Esophagus muscularis mucosa (tissue), 4 donors: ENCODE measurements at regions of chr13 and their contacts with region 1.

Region 1: GRCh38 chr13:110097013-110097412 is 209.9 kb downstream of the COL4A1 start:
- DNase-seq: no peak
- H3K4me3 ChIP-seq: no peak overlapping the region
- H3K27ac ChIP-seq: peak overlapping the region in 3 of 4 donors; percentile 1 to 87 (median 85)
- H3K4me1 ChIP-seq: peaks cover 20 to 40% (median 26%) of the 10 kb centered on the region in 4 donors
- H3K27me3 ChIP-seq: no peaks in the 10 kb centered on the region
- CTCF ChIP-seq: no peak
- EP300 ChIP-seq: no peak
- POLR2A ChIP-seq: no peak

Region 2: GRCh38 chr13:110023729-110024644 is 73.0 kb before region 1 on chr13:
- intact Hi-C with region 1: loop called (anchors 5 kb)
- DNase-seq: no peak
- H3K4me3 ChIP-seq: no peak overlapping the region
- H3K27ac ChIP-seq: peak overlapping the region; percentile 81 to 87 (median 84)
- H3K4me1 ChIP-seq: peaks cover 17 to 24% (median 20%) of the 10 kb centered on the region in 4 donors
- H3K27me3 ChIP-seq: no peaks in the 10 kb centered on the region
- CTCF ChIP-seq: no peak
- EP300 ChIP-seq: peak; percentile 57
- POLR2A ChIP-seq: no peak

Region 3: DNA sequence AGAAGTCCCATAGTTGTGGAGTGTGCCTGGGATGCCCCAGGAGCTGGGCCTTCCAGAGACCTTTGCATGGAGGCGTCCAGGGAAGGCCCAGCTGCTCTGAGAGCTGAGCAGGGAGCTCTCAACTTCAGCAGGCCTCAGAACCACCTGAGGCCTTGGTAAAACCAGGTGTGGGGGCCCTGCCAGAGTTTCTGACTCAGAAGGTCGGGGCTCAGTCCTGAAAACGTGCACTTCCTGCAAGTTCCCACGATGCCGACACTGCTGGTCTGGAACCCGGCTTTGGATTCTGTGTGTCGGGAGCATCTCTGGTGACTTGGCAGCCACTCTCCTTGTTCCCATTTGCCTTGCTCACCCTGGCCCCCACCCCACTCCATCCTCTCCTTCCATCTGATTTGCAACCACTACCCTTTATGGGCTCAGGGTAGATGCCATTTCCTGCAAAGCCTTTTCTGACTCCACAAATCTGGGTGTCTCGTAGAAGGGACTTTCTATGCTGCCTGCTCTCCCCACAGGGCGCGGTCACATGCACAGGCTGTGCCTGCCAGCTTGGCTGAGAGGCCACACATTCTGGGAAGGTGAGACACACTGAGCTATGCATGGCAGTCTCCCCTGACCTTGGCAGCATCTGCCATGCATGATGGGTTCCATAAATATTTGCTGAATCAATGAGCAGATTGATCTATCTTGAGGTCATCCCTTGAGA is 34.8 kb before region 1 on chr13:
- intact Hi-C with region 1: no loop called
- DNase-seq: no peak
- H3K4me3 ChIP-seq: no peak overlapping the region
- H3K27ac ChIP-seq: no peak overlapping the region
- H3K4me1 ChIP-seq: peaks cover 0 to 4% (median 0%) of the 10 kb centered on the region in 4 donors
- H3K27me3 ChIP-seq: no peaks in the 10 kb centered on the region
- CTCF ChIP-seq: no peak
- EP300 ChIP-seq: no peak
- POLR2A ChIP-seq: no peak

Region 4: DNA sequence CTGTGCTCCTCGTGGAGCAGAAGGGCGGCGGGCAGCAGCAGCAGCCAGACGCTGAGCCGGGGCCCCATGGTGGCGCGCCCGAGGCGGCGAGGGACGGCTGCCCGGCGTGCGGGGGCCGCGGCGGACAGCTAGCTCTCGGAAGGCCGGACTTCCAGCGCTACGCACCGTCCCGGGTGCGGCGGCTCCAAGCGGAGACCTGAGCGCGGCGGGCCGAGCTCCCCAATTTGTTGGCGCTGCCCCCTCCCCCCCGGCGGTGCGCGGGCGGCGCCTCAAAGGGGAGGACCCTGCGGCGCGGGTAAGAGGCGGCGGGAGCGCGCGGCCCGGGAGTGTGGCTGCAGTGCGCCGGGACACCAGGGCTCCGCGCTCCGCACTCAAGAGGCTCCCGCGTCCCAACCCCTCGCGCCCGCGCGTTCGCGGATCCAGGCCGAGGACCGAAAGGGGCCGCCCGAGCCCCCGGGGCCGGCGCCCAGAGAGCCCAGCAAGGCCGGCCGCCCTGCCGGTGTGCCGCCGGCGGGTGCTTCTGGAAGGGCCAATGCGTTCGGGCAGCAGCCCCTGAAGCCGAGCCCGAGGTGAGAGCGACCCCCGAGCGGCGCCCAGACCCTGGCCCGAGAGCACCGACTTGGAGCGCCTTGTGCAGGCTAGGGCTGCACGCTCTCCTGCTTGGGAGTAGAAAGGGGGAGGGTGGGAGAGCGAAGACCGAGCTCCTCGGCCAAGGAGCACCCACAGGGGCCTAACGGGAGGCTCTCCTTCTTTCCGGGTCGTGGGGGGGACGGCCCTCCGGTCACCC is 210.1 kb after region 1 on chr13 and contains the starts of genes COL4A1 and COL4A2:
- intact Hi-C with region 1: no loop called
- DNase-seq: no peak
- H3K4me3 ChIP-seq: peak within 1 kb of the TSS; percentile 93 to 97 (median 94)
- H3K27ac ChIP-seq: peak within 1 kb of the TSS; percentile 99
- H3K4me1 ChIP-seq: peaks cover 50 to 68% (median 63%) of the 10 kb centered on the region in 4 donors
- H3K27me3 ChIP-seq: peaks cover 0 to 5% (median 2%) of the 10 kb centered on the region in 4 donors
- CTCF ChIP-seq: no peak
- EP300 ChIP-seq: no peak
- POLR2A ChIP-seq: peak; percentile 86
- total RNA-seq, gene COL4A1: 328 to 578 (median 405) TPM
- total RNA-seq, gene COL4A2: 419 to 931 (median 555) TPM

Region 5: DNA sequence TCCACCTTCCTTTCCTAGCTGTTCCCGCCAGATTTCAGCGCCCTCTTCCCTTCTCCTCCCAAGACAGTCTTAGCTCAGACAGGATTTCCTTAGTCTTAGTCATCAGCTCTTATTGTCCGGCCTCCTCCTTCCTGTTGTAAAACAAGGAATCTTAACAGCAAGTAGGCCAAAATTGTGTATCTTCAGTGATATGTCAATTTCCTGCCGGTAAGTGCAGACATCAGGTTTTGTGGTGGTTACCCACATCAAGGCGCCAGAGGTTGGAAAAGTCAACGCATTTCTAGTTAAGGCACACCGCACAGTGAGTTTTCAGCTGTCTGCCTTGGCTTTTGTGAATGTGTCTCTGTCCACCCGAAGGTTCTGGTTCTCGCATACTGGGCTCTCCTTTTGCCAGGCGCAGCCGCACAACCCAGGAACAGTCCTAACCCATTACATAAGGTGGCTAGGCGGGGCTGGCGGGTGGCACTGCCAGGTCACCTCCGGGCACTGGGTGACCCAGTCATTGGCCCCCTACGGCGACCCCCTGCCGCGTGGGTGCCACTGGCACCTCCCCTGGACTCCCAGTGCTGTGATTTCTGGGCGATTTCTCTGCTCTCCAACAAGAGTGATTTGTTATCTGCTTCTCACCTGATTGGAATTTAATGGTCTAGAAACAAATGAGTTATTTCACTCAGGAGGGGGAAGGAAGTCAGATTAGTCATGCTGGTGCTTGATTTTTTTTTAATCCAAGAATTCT is 222.9 kb after region 1 on chr13:
- intact Hi-C with region 1: no loop called
- DNase-seq: no peak
- H3K4me3 ChIP-seq: peak overlapping the region in 3 of 4 donors; percentile 8 to 24 (median 12)
- H3K27ac ChIP-seq: peak overlapping the region; percentile 81 to 98 (median 92)
- H3K4me1 ChIP-seq: peaks cover 95 to 99% (median 97%) of the 10 kb centered on the region in 4 donors
- H3K27me3 ChIP-seq: no peaks in the 10 kb centered on the region
- CTCF ChIP-seq: no peak
- EP300 ChIP-seq: no peak
- POLR2A ChIP-seq: no peak